Vagina (tissue), 2 donors: ENCODE measurements at regions of chr22 and their contacts with region 1.

Region 1: DNA sequence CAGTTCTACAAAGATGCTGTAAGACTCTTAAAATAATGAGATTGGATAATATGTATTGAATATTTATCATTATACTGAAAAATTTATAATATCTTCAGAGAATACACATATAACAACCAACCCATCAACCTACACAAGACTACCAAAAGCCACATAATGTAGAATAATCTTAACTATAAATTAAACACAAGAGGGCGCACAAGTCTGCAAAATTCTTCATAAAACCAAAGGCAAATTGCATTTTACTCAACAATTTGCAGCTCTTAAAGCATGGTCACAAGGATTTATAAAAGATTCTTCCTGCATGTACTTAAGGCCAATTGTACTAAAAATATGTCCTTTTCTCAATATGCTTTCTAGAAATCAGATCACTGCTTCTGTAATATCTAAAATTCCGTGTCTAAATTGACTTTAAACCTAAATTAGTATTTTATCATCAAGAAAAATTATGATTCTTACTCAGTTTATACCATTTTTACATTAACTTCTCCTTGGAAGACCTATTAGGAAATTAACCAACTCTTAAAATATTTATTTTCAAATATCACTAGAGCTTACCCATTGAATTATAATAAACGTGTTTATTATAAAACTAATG is 79.0 kb downstream of the TTC28 start:
- DNase-seq: no peak
- H3K4me3 ChIP-seq: no peak overlapping the region
- H3K27ac ChIP-seq: no peak overlapping the region
- H3K4me1 ChIP-seq: no peaks in the 10 kb centered on the region
- H3K27me3 ChIP-seq: no peaks in the 10 kb centered on the region
- CTCF ChIP-seq: peak; percentile 9 to 57 (median 47)
- POLR2A ChIP-seq: no peak

Region 2: GRCh38 chr22:28656181-28656580 is 55.5 kb after region 1 on chr22:
- intact Hi-C with region 1: no loop called
- DNase-seq: no peak
- H3K4me3 ChIP-seq: no peak overlapping the region
- H3K27ac ChIP-seq: no peak overlapping the region
- H3K4me1 ChIP-seq: no peaks in the 10 kb centered on the region
- H3K27me3 ChIP-seq: no peaks in the 10 kb centered on the region
- CTCF ChIP-seq: no peak
- POLR2A ChIP-seq: no peak

Region 3: DNA sequence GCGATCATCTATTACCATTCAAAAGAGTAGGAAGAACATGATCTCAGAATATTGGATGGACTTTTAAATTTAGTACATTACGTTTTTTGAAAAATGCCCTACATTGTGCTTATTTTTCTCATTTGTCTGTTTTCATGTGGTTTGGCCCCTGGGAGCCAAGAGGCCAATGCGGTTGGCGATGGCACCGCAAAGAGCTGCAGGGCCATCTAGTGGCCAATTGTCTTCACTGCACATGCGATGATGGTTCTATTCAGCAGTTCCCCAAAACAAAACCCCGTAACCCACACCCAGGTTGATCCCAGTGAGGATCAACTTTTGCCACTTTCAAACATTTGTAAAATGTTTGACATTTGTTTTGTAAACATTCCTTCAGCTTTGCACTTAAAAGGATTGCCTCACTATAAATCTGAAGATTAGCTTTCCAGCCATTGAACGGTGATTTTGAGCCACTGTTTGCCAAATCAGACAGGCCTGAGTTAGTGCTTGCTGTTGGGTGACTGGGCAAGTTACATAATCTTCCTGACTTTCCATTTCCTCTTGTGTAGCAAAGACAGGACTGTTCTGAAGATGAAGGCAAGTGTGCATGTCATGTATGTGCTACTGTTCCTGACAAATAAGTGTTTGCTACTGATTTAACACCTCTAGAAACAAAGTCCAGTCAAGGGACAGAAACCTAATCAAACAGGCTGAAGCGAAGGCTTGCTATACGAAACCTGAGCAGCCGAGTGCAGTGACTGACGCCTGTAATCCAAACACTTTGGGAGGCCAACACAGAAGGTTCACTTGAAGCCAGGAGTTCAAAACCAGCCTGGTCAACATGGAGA is 228.9 kb after region 1 on chr22:
- intact Hi-C with region 1: loop called (anchors 5 kb)
- DNase-seq: no peak
- H3K4me3 ChIP-seq: no peak overlapping the region
- H3K27ac ChIP-seq: peak overlapping the region; percentile 51
- H3K4me1 ChIP-seq: peaks cover 6% of the 10 kb centered on the region
- H3K27me3 ChIP-seq: no peaks in the 10 kb centered on the region
- CTCF ChIP-seq: peak; percentile 88 to 99 (median 90)
- POLR2A ChIP-seq: no peak